PC-9 (cell line): ENCODE measurements at regions of chr16 and their contacts with region 1.

Region 1: GRCh38 chr16:15996432-15997109 is 47.2 kb downstream of the ABCC1 start:
- DNase-seq: peak; percentile 91
- H3K4me3 ChIP-seq: no peak overlapping the region
- H3K27ac ChIP-seq: peak overlapping the region; percentile 43
- H3K4me1 ChIP-seq: peaks cover 44% of the 10 kb centered on the region
- H3K27me3 ChIP-seq: no peaks in the 10 kb centered on the region
- CTCF ChIP-seq: no peak; the same call in 1 of the 2 replicates

Region 2: DNA sequence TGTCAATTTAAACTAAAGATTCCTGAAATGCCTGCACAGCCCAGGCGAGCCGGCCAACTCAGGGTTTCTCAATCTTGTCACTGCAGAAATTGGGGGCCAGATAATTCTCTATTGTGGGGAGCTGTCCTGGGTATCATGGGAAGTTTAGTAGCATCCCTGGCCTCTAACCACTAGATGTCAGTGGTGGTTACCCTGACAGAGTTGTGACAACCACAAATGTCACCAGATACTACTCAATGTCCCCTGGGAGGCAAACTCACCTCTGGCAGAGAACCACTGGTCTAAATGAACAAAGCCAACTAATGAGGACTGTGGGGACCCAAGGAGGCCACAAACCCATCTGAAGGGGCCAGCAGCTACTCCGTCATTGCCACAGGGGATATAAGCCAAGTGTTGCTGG is 230.7 kb before region 1 on chr16:
- CTCF ChIA-PET with region 1: no interaction called
- POLR2A ChIA-PET with region 1: no interaction called
- intact Hi-C with region 1: loop called (anchors 5 kb)
- DNase-seq: peak; percentile 45 to 53
- H3K4me3 ChIP-seq: no peak overlapping the region
- H3K27ac ChIP-seq: no peak overlapping the region
- H3K4me1 ChIP-seq: no peaks in the 10 kb centered on the region
- H3K27me3 ChIP-seq: peaks cover 14% of the 10 kb centered on the region
- CTCF ChIP-seq: peak; percentile 73

Region 3: DNA sequence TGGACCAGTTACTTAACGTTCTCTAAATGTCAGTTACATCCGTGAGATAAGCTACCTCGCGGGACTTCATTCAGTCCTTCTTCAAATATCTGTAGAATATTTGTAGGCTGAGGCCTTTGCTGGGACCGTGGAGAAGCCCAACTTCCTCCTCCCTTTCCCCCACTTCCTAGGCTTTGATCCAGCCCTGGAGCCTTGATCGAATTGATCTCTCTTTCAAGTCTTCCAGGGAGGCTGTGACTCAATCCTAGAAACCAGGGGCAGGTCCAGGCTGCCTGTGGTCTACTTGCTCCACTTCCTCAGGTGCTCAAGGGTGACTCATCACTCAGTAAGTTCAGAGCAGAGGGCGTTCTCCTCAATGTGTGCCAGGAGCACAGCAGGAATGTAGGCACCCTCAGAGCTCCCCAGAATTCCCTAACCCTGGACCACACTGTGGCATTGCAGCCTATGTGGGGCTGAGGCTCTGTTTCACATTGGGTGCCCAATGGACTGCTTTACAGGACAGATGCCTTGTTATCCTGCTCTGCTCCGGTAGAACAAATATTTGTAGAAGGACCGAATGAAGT is 97.0 kb before region 1 on chr16:
- CTCF ChIA-PET with region 1: no interaction called
- POLR2A ChIA-PET with region 1: interaction called, 3 read pairs
- intact Hi-C with region 1: loop called (anchors 1 kb)
- DNase-seq: peak; percentile 94 to 100
- H3K4me3 ChIP-seq: peak overlapping the region; percentile 22; the same call in 1 of the 2 replicates
- H3K27ac ChIP-seq: peak overlapping the region; percentile 89
- H3K4me1 ChIP-seq: peaks cover 56% of the 10 kb centered on the region
- H3K27me3 ChIP-seq: no peaks in the 10 kb centered on the region
- CTCF ChIP-seq: no peak

Region 4: GRCh38 chr16:15933781-15934180 is 62.8 kb before region 1 on chr16:
- CTCF ChIA-PET with region 1: no interaction called
- POLR2A ChIA-PET with region 1: no interaction called
- intact Hi-C with region 1: no loop called
- DNase-seq: no peak
- H3K4me3 ChIP-seq: no peak overlapping the region
- H3K27ac ChIP-seq: no peak overlapping the region
- H3K4me1 ChIP-seq: peaks cover 12% of the 10 kb centered on the region
- H3K27me3 ChIP-seq: no peaks in the 10 kb centered on the region
- CTCF ChIP-seq: no peak

Region 5: GRCh38 chr16:16021988-16022682 is 25.6 kb after region 1 on chr16:
- CTCF ChIA-PET with region 1: interaction called, 4 read pairs
- POLR2A ChIA-PET with region 1: interaction called, 5 read pairs
- intact Hi-C with region 1: loop called (anchors 1 kb)
- DNase-seq: peak; percentile 96 to 99
- H3K4me3 ChIP-seq: peak overlapping the region; percentile 37; the same call in 1 of the 2 replicates
- H3K27ac ChIP-seq: peak overlapping the region; percentile 73
- H3K4me1 ChIP-seq: peaks cover 94% of the 10 kb centered on the region
- H3K27me3 ChIP-seq: no peaks in the 10 kb centered on the region
- CTCF ChIP-seq: no peak

Region 6: DNA sequence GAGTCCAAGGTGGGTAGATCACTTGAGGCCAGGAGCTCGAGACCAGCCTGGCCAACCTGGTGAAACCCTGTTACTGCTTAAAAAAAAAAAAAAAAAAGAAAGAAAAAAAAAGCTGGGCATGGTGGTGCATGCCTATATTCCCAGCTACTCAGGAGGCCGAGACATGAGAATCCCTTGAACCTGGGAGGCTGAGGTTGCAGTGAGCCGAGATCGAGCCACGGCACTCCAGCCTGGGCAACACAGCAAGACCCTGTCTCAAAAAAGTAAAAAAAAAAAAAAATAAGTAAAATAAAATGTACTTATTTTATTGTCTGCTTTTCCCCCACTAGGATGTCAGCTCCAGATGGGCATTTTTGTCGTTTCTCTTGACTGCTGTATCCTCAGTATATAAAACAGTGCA is 60.5 kb after region 1 on chr16:
- CTCF ChIA-PET with region 1: no interaction called
- POLR2A ChIA-PET with region 1: interaction called, 15 read pairs
- intact Hi-C with region 1: no loop called
- DNase-seq: no peak
- H3K4me3 ChIP-seq: no peak overlapping the region
- H3K27ac ChIP-seq: no peak overlapping the region
- H3K4me1 ChIP-seq: no peaks in the 10 kb centered on the region
- H3K27me3 ChIP-seq: no peaks in the 10 kb centered on the region
- CTCF ChIP-seq: no peak

Region 7: GRCh38 chr16:16127469-16128116 is 131.0 kb after region 1 on chr16:
- CTCF ChIA-PET with region 1: no interaction called
- POLR2A ChIA-PET with region 1: no interaction called
- intact Hi-C with region 1: loop called (anchors 1 kb)
- DNase-seq: peak; percentile 69 to 79
- H3K4me3 ChIP-seq: no peak overlapping the region
- H3K27ac ChIP-seq: no peak overlapping the region
- H3K4me1 ChIP-seq: no peaks in the 10 kb centered on the region
- H3K27me3 ChIP-seq: no peaks in the 10 kb centered on the region
- CTCF ChIP-seq: peak; percentile 93